Thyroid gland (tissue), 4 donors: ENCODE measurements at regions of chr1 and their contacts with region 1.

Region 1: DNA sequence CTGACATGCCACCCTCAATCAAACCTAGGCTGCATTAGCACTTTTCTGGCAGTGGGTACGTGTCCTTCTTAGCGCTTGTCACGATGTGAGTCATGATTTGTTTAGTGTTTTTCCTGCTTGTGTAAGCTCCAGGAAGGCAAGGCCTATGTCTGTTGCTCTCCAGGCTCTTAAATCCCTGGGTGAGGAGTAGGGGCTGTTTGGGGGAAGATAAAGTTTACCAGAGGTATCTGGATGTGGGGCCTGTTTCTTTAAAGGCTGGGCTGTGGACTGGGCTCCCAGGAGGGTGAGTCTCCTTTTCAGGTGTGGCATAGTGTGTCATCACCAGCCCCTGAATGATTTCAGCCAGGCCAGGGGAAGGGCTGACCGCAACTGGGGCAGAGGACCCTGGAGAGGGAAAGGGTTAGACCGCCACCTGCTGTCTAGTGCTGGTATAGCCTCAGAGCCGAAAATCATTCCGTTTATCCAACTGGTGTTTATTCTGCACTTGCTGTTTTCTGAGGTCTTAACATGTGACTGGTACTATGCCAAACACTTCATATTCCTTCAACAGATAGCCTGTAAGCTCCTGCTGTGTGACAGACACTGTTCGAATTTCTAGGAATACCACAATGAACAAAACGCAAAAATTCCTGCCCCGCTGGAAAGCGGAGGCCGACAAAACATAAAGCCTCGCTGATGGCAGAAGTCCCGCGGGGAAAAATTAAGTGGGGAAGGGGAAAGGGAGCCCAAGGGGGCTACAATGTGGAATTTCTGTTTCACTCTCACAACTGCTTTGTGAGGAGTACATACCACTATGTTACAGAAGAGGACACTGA is 9.7 kb downstream of the SERINC2 start:
- DNase-seq: peak; percentile 73
- H3K4me3 ChIP-seq: no peak overlapping the region
- H3K27ac ChIP-seq: no peak overlapping the region
- H3K4me1 ChIP-seq: peaks cover 0 to 9% of the 10 kb centered on the region in 2 donors
- H3K27me3 ChIP-seq: no peaks in the 10 kb centered on the region
- CTCF ChIP-seq: peak; percentile 78 to 96 (median 94)
- POLR2A ChIP-seq: no peak

Region 2: GRCh38 chr1:31182352-31182751 is 240.4 kb before region 1 on chr1:
- intact Hi-C with region 1: loop called (anchors 5 kb)
- DNase-seq: peak; percentile 76 to 80
- H3K4me3 ChIP-seq: peak overlapping the region in 1 of 3 donors; percentile 2
- H3K27ac ChIP-seq: no peak overlapping the region
- H3K4me1 ChIP-seq: peaks cover 7 to 14% of the 10 kb centered on the region in 2 donors
- H3K27me3 ChIP-seq: no peaks in the 10 kb centered on the region
- CTCF ChIP-seq: peak in 1 of 6 experiments; percentile 4
- POLR2A ChIP-seq: no peak

Region 3: DNA sequence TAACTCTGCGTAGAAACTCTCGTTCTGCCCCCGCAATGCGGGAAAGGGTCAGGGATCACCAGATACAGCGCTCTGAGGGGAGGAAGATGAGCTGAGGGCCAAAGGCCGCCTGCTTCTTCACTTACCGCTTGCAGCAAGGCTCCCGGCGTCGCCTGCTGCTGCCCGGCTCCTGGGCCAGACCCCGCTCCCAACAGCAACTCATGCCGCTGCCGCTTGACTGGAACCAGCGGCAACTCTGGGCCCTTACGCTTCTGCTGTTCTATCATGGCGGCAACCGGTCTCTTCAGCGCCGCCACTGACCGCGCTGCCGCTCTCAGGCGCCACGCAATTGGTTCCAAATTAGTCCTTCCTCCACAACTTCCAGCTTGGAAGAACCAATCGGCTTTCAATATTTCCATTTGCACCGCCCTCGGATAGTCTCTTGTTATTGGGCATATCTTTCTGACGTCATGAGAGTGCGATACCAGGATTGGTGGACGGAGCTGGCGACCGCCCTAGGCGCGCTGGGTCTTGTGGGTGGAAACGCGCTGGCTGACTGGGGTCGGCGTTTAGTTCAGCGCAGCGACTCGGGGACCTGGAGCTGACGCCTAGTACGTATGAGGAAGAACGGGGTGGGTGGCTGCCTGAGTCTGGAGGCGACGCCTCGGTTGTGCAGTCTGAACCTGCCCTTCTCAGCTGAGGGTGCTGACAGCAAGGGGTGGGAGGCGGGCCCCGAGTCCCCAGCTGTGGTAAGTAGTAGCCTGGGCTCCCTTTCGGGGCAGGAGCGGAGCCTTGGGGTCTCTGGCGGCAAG is 126.0 kb before region 1 on chr1 and contains the starts of genes SNRNP40 and ZCCHC17:
- intact Hi-C with region 1: loop called (anchors 10 kb)
- DNase-seq: peak; percentile 95 to 96
- H3K4me3 ChIP-seq: peak within 1 kb of the TSS; percentile 68 to 99 (median 88)
- H3K27ac ChIP-seq: peak within 1 kb of the TSS; percentile 35 to 84 (median 84)
- H3K4me1 ChIP-seq: peaks cover 10 to 25% of the 10 kb centered on the region in 2 donors
- H3K27me3 ChIP-seq: no peaks in the 10 kb centered on the region
- CTCF ChIP-seq: peak in 2 of 6 experiments; percentile 13 to 20
- POLR2A ChIP-seq: peak; percentile 12 to 95
- total RNA-seq, gene SNRNP40: 39.2 to 63.3 (median 58.7) TPM
- total RNA-seq, gene ZCCHC17: 20.0 to 29.8 (median 23.9) TPM

Region 4: GRCh38 chr1:31548907-31549808 is 126.4 kb after region 1 on chr1:
- intact Hi-C with region 1: loop called (anchors 10 kb)
- DNase-seq: peak; percentile 91 to 92
- H3K4me3 ChIP-seq: peak overlapping the region in 1 of 3 donors; percentile 1
- H3K27ac ChIP-seq: peak overlapping the region; percentile 54 to 70 (median 58)
- H3K4me1 ChIP-seq: peaks cover 5 to 12% of the 10 kb centered on the region in 2 donors
- H3K27me3 ChIP-seq: no peaks in the 10 kb centered on the region
- CTCF ChIP-seq: peak; percentile 92 to 96 (median 94)
- POLR2A ChIP-seq: no peak